ENCODE measurements at regions of chr20 and their contacts with region 1.

Region 1: GRCh38 chr20:62395311-62396242 is 8.7 kb downstream of the RPS21 start:
- DNase-seq: no peak
- H3K4me3 ChIP-seq: no peak overlapping the region
- H3K27ac ChIP-seq: peak overlapping the region in 1 of 59 donors; percentile 37
- H3K27me3 ChIP-seq: no peaks in the 10 kb centered on the region
- CTCF ChIP-seq: no peak

Region 2: DNA sequence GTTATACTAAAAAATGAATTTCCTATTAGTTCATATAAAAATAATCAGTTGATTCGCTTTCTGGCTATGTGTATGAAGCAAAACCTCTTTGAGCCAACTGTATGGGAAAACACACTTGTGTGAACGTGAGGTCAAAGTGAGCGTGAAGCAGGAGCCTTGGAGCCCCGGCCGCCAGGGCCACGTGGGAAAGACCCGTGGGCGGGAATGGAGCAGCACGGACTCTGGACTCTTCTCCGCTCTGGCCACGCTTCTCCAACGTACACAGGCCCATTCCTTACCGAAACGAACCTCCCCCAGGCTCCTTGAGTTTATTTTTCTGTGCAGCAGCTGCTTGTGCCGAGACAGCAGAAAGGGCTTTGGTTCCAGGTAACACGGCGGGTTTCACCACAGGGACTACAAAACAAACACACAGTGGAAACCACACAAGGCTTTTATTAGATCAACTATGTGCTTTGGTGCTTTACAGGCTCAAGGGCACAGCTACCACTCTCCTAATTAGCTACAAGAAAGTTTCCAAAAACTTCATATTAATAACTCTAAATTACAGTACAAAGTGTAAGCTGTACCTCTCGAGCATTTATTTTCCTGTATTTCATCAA is 392.6 kb before region 1 on chr20:
- intact Hi-C with region 1: loop called in 1 of 2 experiments (anchors 10 kb)
- DNase-seq: no peak
- H3K4me3 ChIP-seq: no peak overlapping the region
- H3K27ac ChIP-seq: no peak overlapping the region
- H3K27me3 ChIP-seq: no peaks in the 10 kb centered on the region
- CTCF ChIP-seq: no peak

Measured in dorsolateral prefrontal cortex (tissue), 120 donors.